Posterior vena cava (tissue), 2 donors: ENCODE measurements at regions of chr13 and their contacts with region 1.

Region 1: DNA sequence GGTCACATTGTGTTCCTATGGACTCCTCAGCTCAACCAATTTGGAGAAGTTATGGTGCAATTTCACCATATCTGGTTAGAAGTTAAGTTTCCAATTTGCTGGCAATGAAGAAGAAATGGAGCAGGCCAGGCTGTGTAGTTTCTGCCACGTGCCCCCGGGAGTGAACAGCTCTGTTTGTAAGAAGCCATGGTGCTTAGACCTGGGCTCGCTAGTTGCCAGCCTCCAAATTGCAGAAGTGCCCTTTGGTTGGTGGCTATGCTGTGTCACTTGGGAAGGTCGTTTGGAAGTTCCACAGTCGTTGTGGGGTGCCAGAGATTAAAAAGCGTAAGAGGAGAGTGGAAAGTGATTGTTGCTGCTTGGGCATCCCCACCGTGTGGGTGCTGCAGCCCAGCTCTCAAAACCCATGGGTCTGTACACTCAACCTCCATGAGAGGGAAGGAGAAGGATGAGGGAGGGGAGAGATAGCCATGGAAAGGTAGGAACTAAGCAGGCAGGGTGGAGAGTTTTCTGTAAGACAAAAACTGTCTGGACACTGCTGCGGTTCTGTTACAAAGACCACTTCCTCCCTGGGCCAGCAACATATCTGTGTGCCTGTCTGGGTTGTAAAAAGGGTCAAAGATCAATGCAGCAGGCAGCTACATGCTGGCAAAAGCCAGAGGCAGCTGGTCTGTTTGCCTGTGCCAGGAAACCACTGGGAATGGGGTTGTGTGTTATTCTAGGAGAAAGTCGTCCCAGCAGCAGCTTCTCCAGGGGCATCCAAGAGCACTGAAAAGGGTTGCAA is 10.8 kb downstream of the ALOX5AP start:
- DNase-seq: no peak

Region 2: GRCh38 chr13:29791997-29792780 is 953.9 kb before region 1 on chr13:
- intact Hi-C with region 1: no loop called
- DNase-seq: no peak

Region 3: GRCh38 chr13:30774214-30774730 is 28.2 kb after region 1 on chr13:
- intact Hi-C with region 1: loop called in 1 of 2 experiments (anchors 1 kb)
- DNase-seq: no peak